Panc1 (cell line): ENCODE measurements at regions of chr5 and their contacts with region 1.

Region 1: GRCh38 chr5:81800797-81801196 is 49.9 kb upstream of the SSBP2 start:
- DNase-seq: no peak
- ATAC-seq: no peak
- H3K4me3 ChIP-seq: no peak overlapping the region
- H3K27ac ChIP-seq: no peak overlapping the region
- H3K4me1 ChIP-seq: no peaks in the 10 kb centered on the region
- H3K27me3 ChIP-seq: no peaks in the 10 kb centered on the region
- CTCF ChIP-seq: no peak

Region 2: GRCh38 chr5:81980160-81980559 is 179.4 kb after region 1 on chr5:
- CTCF ChIA-PET with region 1: no interaction called
- POLR2A ChIA-PET with region 1: interaction called, 11 read pairs
- in situ Hi-C with region 1: no loop called
- intact Hi-C with region 1: no loop called
- DNase-seq: no peak
- ATAC-seq: no peak
- H3K4me3 ChIP-seq: no peak overlapping the region
- H3K27ac ChIP-seq: no peak overlapping the region
- H3K4me1 ChIP-seq: no peaks in the 10 kb centered on the region
- H3K27me3 ChIP-seq: no peaks in the 10 kb centered on the region
- CTCF ChIP-seq: no peak